Heart right ventricle (tissue), 16 donors: ENCODE measurements at regions of chr1 and their contacts with region 1.

Region 1: GRCh38 chr1:30106125-30106524 is 617.3 kb downstream of the MATN1 start:
- DNase-seq: no peak
- ATAC-seq: peak in 4 of 8 donors; percentile 41 to 63 (median 50)
- H3K4me3 ChIP-seq: no peak overlapping the region
- H3K27ac ChIP-seq: no peak overlapping the region
- H3K4me1 ChIP-seq: no peaks in the 10 kb centered on the region
- H3K27me3 ChIP-seq: peaks cover 0 to 95% (median 74%) of the 10 kb centered on the region in 7 donors
- CTCF ChIP-seq: peak; percentile 21 to 59 (median 47)

Region 2: GRCh38 chr1:29235955-29236684 is 870.0 kb before region 1 on chr1 and contains the start of gene PTPRU:
- intact Hi-C with region 1: loop called in 8 of 10 experiments (anchors 2 to 10 kb)
- DNase-seq: peak; percentile 72 to 83
- ATAC-seq: peak; percentile 69 to 89 (median 80)
- H3K4me3 ChIP-seq: peak within 1 kb of the TSS; percentile 52 to 82 (median 66)
- H3K27ac ChIP-seq: peak within 1 kb of the TSS in 8 of 10 donors; percentile 13 to 73 (median 54)
- H3K4me1 ChIP-seq: peaks cover 5 to 30% (median 21%) of the 10 kb centered on the region in 9 donors
- H3K27me3 ChIP-seq: peaks cover 0 to 51% (median 0%) of the 10 kb centered on the region in 7 donors
- CTCF ChIP-seq: peak; percentile 63 to 99 (median 82)
- total RNA-seq, gene PTPRU: 8.6 to 29.8 (median 14.5) TPM

Region 3: DNA sequence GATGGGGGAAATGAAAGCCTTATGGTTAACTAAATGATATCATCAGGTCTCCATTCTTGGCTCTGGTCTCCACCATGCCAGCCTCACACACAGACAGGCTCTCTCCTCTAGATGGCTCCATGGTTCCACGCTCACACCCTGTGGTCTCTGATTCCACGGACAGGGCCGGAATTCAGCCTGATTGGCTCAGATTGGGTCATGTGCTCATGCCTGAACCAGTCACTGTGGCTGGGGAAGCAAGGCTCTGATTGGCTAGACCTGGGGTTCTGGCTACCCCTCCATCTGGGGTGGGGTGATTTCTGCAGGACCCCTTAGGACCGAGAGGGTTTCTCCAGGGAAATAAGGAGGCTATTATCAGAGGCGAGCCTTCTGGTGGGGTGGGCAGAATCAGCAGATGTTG is 592.8 kb before region 1 on chr1:
- intact Hi-C with region 1: loop called in 2 of 10 experiments (anchors 10 kb)
- DNase-seq: peak in 1 of 2 donors; percentile 23
- ATAC-seq: peak; percentile 52 to 93 (median 72)
- H3K4me3 ChIP-seq: no peak overlapping the region
- H3K27ac ChIP-seq: no peak overlapping the region
- H3K4me1 ChIP-seq: no peaks in the 10 kb centered on the region
- H3K27me3 ChIP-seq: peaks cover 0 to 40% (median 4%) of the 10 kb centered on the region in 7 donors
- CTCF ChIP-seq: peak; percentile 28 to 61 (median 52)

Region 4: GRCh38 chr1:29793101-29793546 is 313.0 kb before region 1 on chr1:
- intact Hi-C with region 1: loop called in 5 of 10 experiments (anchors 1 to 10 kb)
- DNase-seq: peak; percentile 71 to 78
- ATAC-seq: peak; percentile 55 to 87 (median 79)
- H3K4me3 ChIP-seq: no peak overlapping the region
- H3K27ac ChIP-seq: no peak overlapping the region
- H3K4me1 ChIP-seq: no peaks in the 10 kb centered on the region
- H3K27me3 ChIP-seq: peaks cover 0 to 16% (median 0%) of the 10 kb centered on the region in 7 donors
- CTCF ChIP-seq: peak; percentile 63 to 85 (median 81)

Region 5: GRCh38 chr1:29912425-29912824 is 193.7 kb before region 1 on chr1:
- intact Hi-C with region 1: loop called in 1 of 10 experiments (anchors 10 kb)
- DNase-seq: no peak
- ATAC-seq: no peak
- H3K4me3 ChIP-seq: no peak overlapping the region
- H3K27ac ChIP-seq: no peak overlapping the region
- H3K4me1 ChIP-seq: no peaks in the 10 kb centered on the region
- H3K27me3 ChIP-seq: peaks cover 0 to 14% (median 0%) of the 10 kb centered on the region in 7 donors
- CTCF ChIP-seq: peak in 7 of 9 donors; percentile 6 to 53 (median 30)

Region 6: DNA sequence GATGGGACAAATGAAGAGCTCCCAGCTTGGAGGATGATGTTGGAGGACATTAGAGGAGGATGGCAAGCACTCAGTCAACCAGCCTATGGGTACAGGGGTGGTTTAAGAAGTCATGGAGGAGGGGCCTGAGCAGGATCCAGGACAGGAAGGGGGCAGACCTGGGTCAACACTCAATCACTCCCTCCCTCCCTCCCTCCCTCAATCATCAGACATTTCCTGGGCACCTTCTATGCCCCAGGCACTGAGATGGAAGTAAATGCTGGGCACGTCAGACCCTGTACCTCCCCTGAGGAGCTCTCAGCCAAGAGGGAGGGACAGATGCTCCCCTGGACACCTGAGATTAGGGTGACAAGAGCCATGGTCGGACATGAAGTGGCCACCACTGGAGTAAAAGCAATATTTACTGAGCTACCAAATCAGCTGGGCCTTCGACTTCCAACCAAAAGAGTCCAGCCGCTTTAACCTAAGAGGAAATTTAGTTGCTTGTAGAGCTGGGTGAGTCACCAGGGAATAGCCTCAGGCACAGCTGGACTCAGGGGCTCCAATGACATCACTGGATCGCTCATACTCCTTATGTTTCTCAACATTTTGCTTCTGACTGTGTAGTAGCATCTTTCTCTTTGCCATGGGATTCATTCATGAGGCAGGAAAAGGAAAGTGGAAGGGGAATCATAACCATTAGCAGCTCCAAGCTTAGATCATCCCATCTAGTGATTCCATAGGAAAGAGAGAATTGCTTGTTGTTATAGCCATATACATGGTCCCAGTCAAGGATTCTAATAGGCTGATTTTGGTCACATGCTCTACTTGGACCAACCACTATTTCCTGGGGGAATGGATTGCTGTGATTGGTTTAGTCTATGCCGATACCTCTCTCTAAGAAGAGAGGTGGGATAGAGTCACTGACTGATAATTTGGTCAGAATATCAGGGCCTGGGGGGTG is 47.2 kb before region 1 on chr1:
- intact Hi-C with region 1: no loop called
- DNase-seq: no peak
- ATAC-seq: no peak
- H3K4me3 ChIP-seq: no peak overlapping the region
- H3K27ac ChIP-seq: no peak overlapping the region
- H3K4me1 ChIP-seq: no peaks in the 10 kb centered on the region
- H3K27me3 ChIP-seq: peaks cover 0 to 25% (median 17%) of the 10 kb centered on the region in 7 donors
- CTCF ChIP-seq: no peak

Region 7: DNA sequence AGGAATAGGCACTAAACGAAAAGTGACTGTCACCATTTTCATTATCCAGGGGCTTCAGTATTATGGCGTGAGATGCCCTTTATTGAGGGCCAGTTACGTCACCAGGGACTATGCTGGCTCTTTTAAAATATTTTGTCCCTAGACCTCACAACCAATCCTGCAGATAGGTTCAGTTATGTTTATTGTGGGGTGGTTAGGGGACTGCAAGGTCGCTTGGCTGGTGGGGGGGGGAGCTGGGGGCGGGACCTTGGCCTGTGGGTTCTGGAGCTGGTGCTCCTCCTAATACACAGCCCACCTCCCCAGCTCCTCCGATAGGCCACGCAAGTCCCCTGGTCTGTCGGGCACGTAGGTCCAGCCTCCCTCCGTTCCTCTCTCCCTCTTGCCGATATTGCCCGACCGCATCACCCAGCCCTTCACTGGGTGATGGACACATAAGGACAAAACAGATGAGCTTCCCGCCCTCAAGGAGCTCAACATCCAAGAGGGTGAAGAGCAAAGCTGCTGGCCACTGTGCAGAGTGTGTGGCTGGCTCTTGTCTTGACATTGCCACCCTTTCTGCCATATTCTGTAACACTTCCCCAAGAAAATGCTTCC is 345.5 kb after region 1 on chr1:
- intact Hi-C with region 1: no loop called
- DNase-seq: no peak
- ATAC-seq: no peak
- H3K4me3 ChIP-seq: no peak overlapping the region
- H3K27ac ChIP-seq: no peak overlapping the region
- H3K4me1 ChIP-seq: no peaks in the 10 kb centered on the region
- H3K27me3 ChIP-seq: no peaks in the 10 kb centered on the region
- CTCF ChIP-seq: no peak

Region 8: GRCh38 chr1:30700528-30701257 is 594.6 kb after region 1 on chr1:
- intact Hi-C with region 1: loop called in 2 of 10 experiments (anchors 5 to 10 kb)
- DNase-seq: no peak
- ATAC-seq: peak in 6 of 8 donors; percentile 17 to 78 (median 35)
- H3K4me3 ChIP-seq: no peak overlapping the region
- H3K27ac ChIP-seq: no peak overlapping the region
- H3K4me1 ChIP-seq: peaks cover 0 to 21% (median 0%) of the 10 kb centered on the region in 9 donors
- H3K27me3 ChIP-seq: peaks cover 0 to 9% (median 2%) of the 10 kb centered on the region in 7 donors
- CTCF ChIP-seq: no peak